Activated CD4-positive, alpha-beta T cell treated with anti-CD3 and anti-CD28 coated beads, Interleukin-2, amount 10 ng/mL, durations not matched to agents 7 days and 5 days (primary cell): ENCODE measurements at regions of chr9 and their contacts with region 1.

Region 1: DNA sequence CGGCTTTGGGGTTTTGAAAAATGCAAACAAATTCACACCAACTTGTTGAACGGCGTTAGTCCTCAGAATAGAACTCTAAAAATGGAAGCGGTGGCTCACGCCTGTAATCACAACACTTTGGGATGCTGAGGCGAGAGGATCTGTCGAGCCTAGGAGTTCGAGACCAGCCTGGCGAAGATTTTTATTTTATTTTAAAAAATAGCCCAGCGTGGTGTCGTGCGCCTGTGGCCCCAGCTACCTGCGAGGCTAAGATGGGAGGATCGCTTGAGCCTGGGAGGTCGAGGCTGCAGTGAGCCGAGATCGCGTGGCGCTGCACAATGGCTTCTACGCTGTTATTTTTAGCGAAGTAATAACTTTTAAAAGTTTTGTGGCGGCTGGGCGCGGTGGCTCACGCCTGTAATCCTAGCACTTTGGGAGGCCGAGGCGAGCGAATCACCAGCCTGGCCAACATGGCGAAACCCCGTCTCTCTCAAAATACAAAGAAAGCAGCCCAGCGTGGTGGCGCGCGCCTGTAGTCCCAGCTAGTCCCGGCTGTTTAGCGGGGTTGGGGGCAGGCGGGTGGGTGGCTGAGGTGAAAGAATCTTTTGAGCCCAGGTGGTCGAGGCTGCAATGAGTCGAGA is 699 bp upstream of the PLIN2 start:
- DNase-seq: peak; percentile 29
- H3K4me3 Mint-ChIP-seq: peak overlapping the region; percentile 93
- H3K27ac Mint-ChIP-seq: peak overlapping the region; percentile 99
- H3K4me1 Mint-ChIP-seq: peaks cover 63% of the 10 kb centered on the region
- H3K27me3 Mint-ChIP-seq: no peaks in the 10 kb centered on the region

Region 2: DNA sequence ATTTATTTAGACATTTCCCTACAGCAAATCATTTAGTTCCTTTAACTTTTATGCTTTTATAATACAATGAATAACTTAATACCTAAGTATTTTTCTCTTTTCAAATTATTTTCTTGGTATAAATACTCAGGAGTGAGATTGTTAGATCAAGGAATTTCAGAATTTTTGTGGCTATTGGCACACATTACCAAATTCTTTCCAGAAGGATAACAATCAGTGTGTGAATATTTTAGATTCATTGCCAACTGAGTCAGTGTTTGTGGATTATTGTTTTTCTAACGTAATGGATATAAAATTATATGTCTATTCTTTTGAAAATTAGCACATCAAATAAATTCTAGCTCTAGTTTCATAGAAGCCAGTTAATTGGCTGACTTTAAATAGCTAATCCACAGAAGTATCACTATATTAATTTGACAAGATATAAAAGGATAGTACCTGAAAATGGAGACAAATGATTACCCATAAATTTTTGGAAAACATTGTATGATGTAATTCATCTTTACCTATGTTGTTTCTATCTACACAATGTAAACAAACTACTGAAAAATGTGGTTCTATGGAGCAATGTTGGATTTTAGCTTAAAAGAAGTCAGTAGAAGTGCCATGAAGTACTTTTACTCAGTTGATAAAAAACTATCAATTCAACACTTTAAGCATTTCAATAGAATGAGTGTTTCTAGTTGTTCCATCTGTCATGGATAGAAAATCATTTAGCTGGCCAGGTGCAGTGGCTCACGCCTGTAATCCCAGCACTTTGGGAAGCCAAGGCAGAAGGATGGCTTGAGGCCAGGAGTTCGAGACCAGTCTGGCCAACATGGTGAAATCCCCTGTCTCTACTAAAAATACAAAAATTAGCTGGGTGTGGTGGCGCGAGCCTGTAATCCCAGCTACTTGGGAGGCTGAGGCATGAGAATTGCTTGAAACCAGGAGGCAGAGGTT is 469.0 kb before region 1 on chr9:
- CTCF ChIA-PET with region 1: no interaction called
- POLR2A ChIA-PET with region 1: no interaction called
- DNase-seq: no peak
- H3K4me3 Mint-ChIP-seq: no peak overlapping the region
- H3K27ac Mint-ChIP-seq: no peak overlapping the region
- H3K4me1 Mint-ChIP-seq: no peaks in the 10 kb centered on the region
- H3K27me3 Mint-ChIP-seq: no peaks in the 10 kb centered on the region

Region 3: DNA sequence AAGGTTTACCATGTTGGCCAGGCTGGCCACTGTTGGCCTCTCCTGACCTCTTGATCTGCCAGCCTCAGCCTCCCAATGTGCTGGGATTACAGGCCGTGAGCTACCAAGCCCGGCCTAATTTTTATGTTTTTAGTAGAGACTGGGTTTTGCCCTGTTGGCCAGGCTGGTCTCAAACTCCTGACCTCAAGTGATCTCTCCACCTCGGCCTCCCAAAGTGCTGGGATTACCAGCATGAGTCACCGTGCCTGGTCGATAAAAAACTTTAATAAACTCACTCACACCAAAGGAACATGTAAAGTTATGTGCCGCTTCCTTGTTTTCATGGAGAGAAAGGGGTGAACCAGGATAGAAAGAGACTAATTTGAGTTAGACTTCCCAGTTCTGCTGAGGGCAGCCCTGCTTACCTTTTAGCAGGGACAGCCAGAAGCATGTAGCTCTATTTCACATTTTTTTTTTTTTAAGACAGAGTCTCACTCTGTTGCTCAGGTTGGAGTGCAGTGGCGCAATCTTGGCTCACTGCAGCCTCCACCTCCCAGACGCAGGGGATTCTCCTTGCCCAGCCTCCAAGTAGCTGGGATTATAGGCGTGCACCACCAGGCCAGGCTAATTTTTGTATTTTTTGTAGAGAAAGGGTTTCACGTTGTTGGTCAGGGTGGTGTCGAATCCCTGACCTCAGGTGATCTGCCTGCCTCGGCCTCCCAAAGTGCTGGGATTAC is 13.9 kb before region 1 on chr9:
- CTCF ChIA-PET with region 1: interaction called, 11 read pairs
- POLR2A ChIA-PET with region 1: no interaction called
- DNase-seq: no peak
- H3K4me3 Mint-ChIP-seq: no peak overlapping the region
- H3K27ac Mint-ChIP-seq: no peak overlapping the region
- H3K4me1 Mint-ChIP-seq: peaks cover 3% of the 10 kb centered on the region
- H3K27me3 Mint-ChIP-seq: no peaks in the 10 kb centered on the region